OCI-LY7 (cell line): ENCODE measurements at regions of chr3 and their contacts with region 1.

Region 1: GRCh38 chr3:39255503-39256325 is 24.1 kb downstream of the CX3CR1 start:
- DNase-seq: peak; percentile 95
- H3K4me3 ChIP-seq: peak overlapping the region; percentile 45
- H3K27ac ChIP-seq: peak overlapping the region; percentile 91
- H3K4me1 ChIP-seq: peaks cover 59% of the 10 kb centered on the region
- CTCF ChIP-seq: no peak

Region 2: GRCh38 chr3:39232859-39233258 is 22.9 kb before region 1 on chr3:
- CTCF ChIA-PET with region 1: interaction called, 3 read pairs
- POLR2A ChIA-PET with region 1: interaction called, 6 read pairs
- intact Hi-C with region 1: loop called (anchors 2 kb)
- DNase-seq: peak; percentile 55
- H3K4me3 ChIP-seq: no peak overlapping the region
- H3K27ac ChIP-seq: no peak overlapping the region
- H3K4me1 ChIP-seq: peaks cover 22% of the 10 kb centered on the region
- CTCF ChIP-seq: no peak

Region 3: DNA sequence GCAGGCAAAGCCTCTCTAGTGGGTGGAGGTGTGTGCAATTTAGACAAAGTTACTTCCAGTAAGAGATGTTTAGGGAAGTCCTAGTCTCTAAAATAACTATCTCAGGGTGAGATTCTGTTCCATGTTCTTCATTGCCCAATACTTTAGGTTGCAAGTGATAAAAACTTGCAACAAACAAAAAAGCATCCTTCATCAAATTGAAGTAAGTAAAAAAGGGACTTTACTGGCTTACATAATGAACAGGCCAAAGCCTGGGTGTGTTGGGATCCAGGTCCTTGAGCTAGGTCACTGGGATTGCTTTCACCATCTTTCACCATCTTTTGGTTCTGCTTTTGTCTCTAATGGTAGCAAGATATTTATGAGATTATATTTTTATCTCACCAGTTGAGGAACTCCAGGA is 14.2 kb before region 1 on chr3:
- CTCF ChIA-PET with region 1: interaction called, 4 read pairs
- POLR2A ChIA-PET with region 1: interaction called, 11 read pairs
- intact Hi-C with region 1: no loop called
- DNase-seq: no peak
- H3K4me3 ChIP-seq: no peak overlapping the region
- H3K27ac ChIP-seq: no peak overlapping the region
- H3K4me1 ChIP-seq: no peaks in the 10 kb centered on the region
- CTCF ChIP-seq: no peak